HEK293 (cell line): ENCODE measurements at regions of chr5 and their contacts with region 1.

Region 1: DNA sequence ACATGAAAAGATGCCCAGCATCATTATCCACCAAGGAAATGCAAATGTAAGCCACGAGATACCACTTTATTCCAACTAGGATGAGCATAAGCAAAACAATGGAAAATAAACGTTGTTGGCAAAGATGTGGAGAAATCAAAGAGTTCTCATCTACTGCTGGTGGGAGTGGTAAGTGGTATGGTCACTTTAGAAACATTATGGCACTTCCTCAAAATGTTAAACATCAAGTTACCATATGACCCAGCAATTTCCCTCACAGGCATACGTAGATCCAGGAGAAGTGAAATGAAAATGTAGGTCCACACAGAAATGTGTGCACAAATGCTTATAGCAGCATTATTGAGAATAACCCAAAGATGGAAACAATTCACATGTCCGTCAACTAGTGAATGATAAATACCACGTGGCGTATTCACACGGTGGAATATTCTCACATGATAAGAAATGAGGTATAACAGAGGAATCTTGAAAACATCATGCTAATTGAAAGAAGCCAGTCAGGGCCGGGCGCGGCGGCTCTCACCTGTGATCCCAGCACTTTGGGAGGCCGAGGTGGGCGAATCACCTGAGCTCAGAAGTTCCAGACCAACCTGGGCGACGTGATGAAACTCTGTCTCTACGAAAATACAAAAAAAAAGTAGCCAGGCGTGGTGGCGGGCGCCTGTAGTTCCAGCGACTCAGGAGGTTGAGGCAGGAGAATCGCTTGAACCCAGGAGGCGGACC is 16.4 kb upstream of the FLT4 start:
- H3K4me3 ChIP-seq: no peak overlapping the region
- H3K27ac ChIP-seq: no peak overlapping the region
- H3K4me1 ChIP-seq: no peaks in the 10 kb centered on the region
- CTCF ChIP-seq: no peak

Region 2: GRCh38 chr5:180618819-180619562 is 46.9 kb before region 1 on chr5:
- CTCF ChIA-PET with region 1: interaction called, 10 read pairs
- POLR2A ChIA-PET with region 1: no interaction called
- H3K4me3 ChIP-seq: peak overlapping the region; percentile 46
- H3K27ac ChIP-seq: peak overlapping the region; percentile 78; the same call in 1 of the 2 replicates
- H3K4me1 ChIP-seq: no peaks in the 10 kb centered on the region; the same call in 1 of the 2 replicates
- CTCF ChIP-seq: peak; percentile 74

Region 3: DNA sequence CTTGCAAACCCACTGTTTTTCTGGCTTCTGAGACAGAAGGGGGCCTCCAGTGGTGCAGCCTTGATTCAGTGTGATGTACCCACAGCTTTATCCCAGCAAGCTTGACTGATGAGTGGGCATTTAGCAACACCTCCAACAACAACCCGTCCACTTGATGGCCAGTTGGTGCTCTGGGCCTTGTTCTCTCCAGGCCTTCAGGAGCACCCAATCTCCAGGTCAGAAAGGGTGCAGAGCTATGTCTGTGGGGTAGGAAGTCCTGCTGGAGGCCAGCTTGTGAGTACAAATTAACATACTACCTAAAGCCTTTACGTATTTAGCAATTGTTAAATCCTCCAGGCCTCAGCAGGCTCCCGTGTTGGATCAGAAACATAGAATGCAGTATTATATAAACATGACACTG is 605.2 kb after region 1 on chr5:
- CTCF ChIA-PET with region 1: no interaction called
- POLR2A ChIA-PET with region 1: no interaction called
- H3K4me3 ChIP-seq: no peak overlapping the region
- H3K27ac ChIP-seq: no peak overlapping the region
- H3K4me1 ChIP-seq: no peaks in the 10 kb centered on the region
- CTCF ChIP-seq: no peak